Dorsolateral prefrontal cortex (tissue), 120 donors: ENCODE measurements at regions of chr15 and their contacts with region 1.

Region 1: DNA sequence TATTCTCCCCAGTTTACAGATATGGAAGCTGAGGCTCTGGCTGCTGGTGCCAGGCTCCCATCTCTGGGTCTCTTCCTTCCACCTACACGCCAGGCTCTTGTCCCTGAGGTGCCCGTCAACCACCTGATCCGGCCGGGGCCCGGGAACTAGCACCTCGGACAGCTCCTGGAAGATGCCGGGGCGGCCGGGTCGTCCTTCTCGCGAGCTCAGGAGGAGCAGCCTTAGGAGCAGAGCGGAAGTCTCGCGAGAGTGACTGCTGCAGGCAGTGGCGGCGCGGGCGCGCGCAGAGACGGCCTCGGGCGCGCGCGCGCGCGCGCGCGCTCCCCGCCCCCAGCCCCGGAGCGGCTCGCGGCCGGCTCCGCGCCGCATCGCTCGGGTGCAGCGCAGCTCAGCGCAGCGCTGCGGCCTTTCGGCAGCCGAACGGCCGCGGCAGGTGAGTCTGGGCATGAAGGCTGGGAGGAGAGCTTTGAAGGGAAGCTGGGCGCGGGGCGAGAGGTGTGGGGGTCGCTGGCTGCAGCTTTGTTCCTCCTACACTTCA is at the start of gene SCAMP5:
- DNase-seq: peak; percentile 89 to 99 (median 96)
- H3K4me3 ChIP-seq: peak within 1 kb of the TSS; percentile 64 to 97 (median 87)
- H3K27ac ChIP-seq: peak within 1 kb of the TSS; percentile 51 to 96 (median 90)
- H3K27me3 ChIP-seq: no peaks in the 10 kb centered on the region
- CTCF ChIP-seq: peak in 7 of 56 donors; percentile 9 to 29 (median 17)
- total RNA-seq, gene SCAMP5: 158 to 432 (median 337) TPM

Region 2: DNA sequence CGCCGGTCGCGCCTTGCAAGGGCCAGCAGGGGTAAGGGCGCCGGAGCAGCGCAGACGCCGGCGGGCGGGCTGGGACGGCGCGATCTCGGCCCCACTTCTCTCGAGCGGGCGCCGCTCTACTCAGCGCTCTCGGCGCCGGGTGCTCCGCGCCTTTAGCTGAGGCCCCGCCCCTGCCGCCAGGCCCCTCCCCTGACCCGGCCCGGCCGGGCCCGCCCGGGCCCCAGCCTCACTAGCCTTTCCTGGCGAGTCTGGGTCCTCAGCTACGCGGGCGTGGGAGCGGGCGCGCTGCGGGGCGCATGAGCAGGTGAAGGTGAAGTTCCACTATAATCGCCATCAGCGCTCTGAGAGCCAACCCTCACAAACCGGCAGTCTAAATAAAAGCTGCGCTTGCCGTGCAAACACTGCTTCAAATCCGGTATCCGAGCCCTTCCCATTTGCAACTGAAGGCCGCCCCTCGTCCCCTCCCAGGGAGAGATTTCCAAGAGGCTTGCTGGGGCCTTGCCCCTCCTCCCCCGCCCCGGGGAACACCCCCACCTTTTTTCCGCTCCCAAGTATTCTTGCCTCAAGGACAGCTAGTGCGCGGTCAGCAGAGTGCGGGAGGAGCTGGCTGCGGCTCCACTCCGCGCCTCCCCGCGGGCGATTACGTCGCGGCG is 38.5 kb before region 1 on chr15 and contains the start of gene RPP25:
- intact Hi-C with region 1: loop called (anchors 5 kb)
- DNase-seq: peak; percentile 42 to 82 (median 59)
- H3K4me3 ChIP-seq: peak within 1 kb of the TSS; percentile 49 to 81 (median 67)
- H3K27ac ChIP-seq: peak within 1 kb of the TSS in 52 of 59 donors; percentile 10 to 84 (median 65)
- H3K27me3 ChIP-seq: peaks cover 0 to 20% (median 3%) of the 10 kb centered on the region in 45 donors
- CTCF ChIP-seq: no peak
- total RNA-seq, gene RPP25: 5.0 to 16.7 (median 8.5) TPM

Region 3: DNA sequence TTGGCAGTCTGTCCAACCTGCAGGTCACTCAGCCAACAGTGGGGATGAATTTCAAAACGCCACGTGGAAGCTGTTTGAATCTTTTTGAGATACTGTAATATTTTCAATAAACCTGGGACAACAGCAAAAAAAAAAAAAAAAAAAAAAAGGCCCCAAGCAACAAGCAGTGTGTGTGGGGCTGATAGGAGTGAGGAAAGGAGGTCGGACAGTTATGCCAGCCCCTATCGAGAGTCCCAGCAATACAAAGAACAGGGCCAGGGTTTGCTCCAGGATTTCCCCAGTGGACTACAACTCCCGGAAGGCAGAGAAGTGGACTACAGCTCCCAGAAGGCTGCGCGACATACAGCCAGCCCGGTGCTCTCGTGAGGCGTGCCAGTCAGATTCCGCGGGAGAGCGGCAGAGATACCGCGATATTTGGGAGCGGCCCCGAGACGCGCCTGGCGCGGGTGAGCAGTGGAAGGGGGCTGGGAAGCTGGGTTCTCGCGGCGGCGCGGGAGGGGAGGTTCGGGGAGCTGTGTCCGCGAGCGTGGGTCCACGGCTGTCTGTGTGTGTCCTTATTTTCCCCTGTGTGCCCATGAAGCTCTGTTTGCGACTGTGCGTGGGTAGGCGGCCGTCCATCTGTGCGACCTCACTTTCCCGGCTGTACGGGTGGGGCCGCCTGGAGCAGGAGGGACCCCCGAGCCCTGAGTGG is 28.0 kb after region 1 on chr15 and contains the start of gene PPCDC:
- intact Hi-C with region 1: loop called in 1 of 2 experiments (anchors 1 kb)
- DNase-seq: peak; percentile 92 to 98 (median 97)
- H3K4me3 ChIP-seq: peak within 1 kb of the TSS; percentile 49 to 98 (median 89)
- H3K27ac ChIP-seq: peak within 1 kb of the TSS in 57 of 59 donors; percentile 27 to 96 (median 88)
- H3K27me3 ChIP-seq: no peaks in the 10 kb centered on the region
- CTCF ChIP-seq: peak in 47 of 56 donors; percentile 3 to 62 (median 33)
- total RNA-seq, gene PPCDC: 3.9 to 23.6 (median 9.9) TPM

Region 4: GRCh38 chr15:75042730-75043508 is 47.6 kb after region 1 on chr15:
- intact Hi-C with region 1: loop called in 1 of 2 experiments (anchors 2 kb)
- DNase-seq: peak in 9 of 10 donors; percentile 48 to 76 (median 67)
- H3K4me3 ChIP-seq: peak overlapping the region in 42 of 59 donors; percentile 2 to 51 (median 26)
- H3K27ac ChIP-seq: peak overlapping the region; percentile 20 to 95 (median 87)
- H3K27me3 ChIP-seq: no peaks in the 10 kb centered on the region
- CTCF ChIP-seq: peak in 54 of 56 donors; percentile 17 to 64 (median 46)

Region 5: DNA sequence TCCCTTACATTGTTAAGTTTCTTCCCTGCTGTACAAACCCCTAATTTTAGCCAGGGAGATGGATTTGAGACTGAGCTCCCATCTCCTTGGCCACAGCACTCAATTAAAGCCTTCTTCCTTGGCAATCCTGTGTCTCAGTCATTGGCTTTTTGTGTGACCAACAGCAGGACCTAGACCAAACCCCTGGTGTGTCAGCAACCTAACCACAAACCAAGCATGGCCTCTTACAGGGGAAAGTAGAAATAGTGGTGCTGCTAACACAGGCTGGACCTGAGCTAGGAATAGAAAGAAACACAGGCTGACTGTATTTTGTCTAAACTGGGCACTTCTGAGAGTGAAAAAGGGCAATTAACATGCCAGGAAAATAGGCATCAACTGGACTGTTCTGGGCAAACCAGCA is 66.0 kb after region 1 on chr15:
- intact Hi-C with region 1: no loop called
- DNase-seq: no peak
- H3K4me3 ChIP-seq: no peak overlapping the region
- H3K27ac ChIP-seq: no peak overlapping the region
- H3K27me3 ChIP-seq: no peaks in the 10 kb centered on the region
- CTCF ChIP-seq: no peak